Activated CD4-positive, alpha-beta T cell treated with anti-CD3 and anti-CD28 coated beads, Interleukin-2, amount 10 ng/mL, durations not matched to agents 7 days and 5 days (primary cell): ENCODE measurements at regions of chr4 and their contacts with region 1.

Region 1: DNA sequence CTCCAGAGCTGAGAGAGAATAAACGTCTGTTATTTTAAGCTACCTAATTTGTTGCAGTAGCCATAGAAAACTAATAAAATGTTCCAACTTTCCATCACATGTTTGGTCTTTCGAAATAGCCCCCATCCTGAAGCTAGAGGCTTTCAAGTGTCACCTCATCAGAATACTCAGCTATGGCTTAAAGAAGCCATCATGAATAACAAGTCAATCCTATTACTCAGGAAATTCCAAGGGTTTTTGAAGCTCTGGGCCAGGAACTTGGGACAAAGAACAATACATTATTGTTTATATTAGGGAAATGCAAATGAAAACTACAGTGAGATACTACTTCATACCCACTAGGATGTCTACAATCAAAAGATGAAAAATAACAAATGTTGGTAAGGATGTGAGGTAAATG is 42.2 kb downstream of the TBCK start:
- DNase-seq: no peak
- H3K4me3 Mint-ChIP-seq: no peak overlapping the region
- H3K27ac Mint-ChIP-seq: no peak overlapping the region
- H3K4me1 Mint-ChIP-seq: peaks cover 5% of the 10 kb centered on the region
- H3K27me3 Mint-ChIP-seq: no peaks in the 10 kb centered on the region

Region 2: GRCh38 chr4:105815701-105816100 is 458.1 kb before region 1 on chr4:
- CTCF ChIA-PET with region 1: no interaction called
- POLR2A ChIA-PET with region 1: interaction called, 10 read pairs
- DNase-seq: no peak
- H3K4me3 Mint-ChIP-seq: no peak overlapping the region
- H3K27ac Mint-ChIP-seq: no peak overlapping the region
- H3K4me1 Mint-ChIP-seq: no peaks in the 10 kb centered on the region
- H3K27me3 Mint-ChIP-seq: no peaks in the 10 kb centered on the region

Region 3: DNA sequence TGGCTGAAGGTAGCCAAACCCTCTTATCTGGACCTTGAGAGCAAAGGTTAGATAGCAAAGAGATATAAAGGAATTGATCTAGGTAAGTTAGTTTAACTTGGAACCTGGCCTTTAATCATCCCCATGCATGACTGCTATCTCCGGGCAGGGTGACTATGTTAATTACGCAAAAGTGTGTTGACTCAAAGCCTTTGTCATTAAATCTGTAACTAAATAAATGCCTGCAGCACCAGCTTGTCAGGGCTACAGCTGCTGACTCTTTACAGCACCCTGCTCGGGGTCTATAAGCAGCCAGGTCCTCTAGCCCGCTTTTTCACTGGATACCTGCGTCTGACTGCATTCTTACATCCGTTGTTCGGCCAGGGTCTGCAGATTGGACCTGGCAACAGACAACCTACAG is 159.5 kb before region 1 on chr4:
- CTCF ChIA-PET with region 1: no interaction called
- POLR2A ChIA-PET with region 1: no interaction called
- DNase-seq: no peak
- H3K4me3 Mint-ChIP-seq: no peak overlapping the region
- H3K27ac Mint-ChIP-seq: no peak overlapping the region
- H3K4me1 Mint-ChIP-seq: no peaks in the 10 kb centered on the region
- H3K27me3 Mint-ChIP-seq: no peaks in the 10 kb centered on the region

Region 4: DNA sequence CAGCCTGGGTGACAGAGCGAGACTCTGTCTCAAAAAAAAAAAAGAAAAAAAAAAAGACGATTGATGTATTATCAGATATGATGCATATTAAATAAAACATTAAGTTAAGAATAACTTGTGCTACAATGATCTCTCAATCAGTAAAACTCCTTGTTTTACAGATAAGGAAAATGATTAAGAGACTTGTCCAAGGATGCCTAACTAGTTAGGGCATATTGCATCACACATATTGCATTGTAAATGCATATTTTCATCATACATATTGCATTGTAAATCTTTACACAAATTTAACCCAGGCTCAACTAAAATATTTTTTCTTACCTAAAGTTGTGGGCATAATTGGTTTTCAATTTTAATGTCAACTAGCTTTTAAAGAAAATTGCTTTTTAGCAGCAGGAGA is 15.9 kb after region 1 on chr4:
- CTCF ChIA-PET with region 1: no interaction called
- POLR2A ChIA-PET with region 1: no interaction called
- DNase-seq: no peak
- H3K4me3 Mint-ChIP-seq: no peak overlapping the region
- H3K27ac Mint-ChIP-seq: no peak overlapping the region
- H3K4me1 Mint-ChIP-seq: no peaks in the 10 kb centered on the region
- H3K27me3 Mint-ChIP-seq: no peaks in the 10 kb centered on the region